Naive thymus-derived CD4-positive, alpha-beta T cell (primary cell): ENCODE measurements at regions of chr1 and their contacts with region 1.

Region 1: GRCh38 chr1:171781176-171781875 is at the start of gene METTL13:
- DNase-seq: peak; percentile 89 to 100 (median 99)
- ATAC-seq: peak; percentile 95
- H3K4me3 ChIP-seq: peak within 1 kb of the TSS; percentile 95
- H3K4me3 Mint-ChIP-seq: peak within 1 kb of the TSS; percentile 90 to 99 (median 94)
- H3K27ac ChIP-seq: peak within 1 kb of the TSS; percentile 74
- H3K27ac Mint-ChIP-seq: peak within 1 kb of the TSS; percentile 93 to 99 (median 96)
- H3K4me1 ChIP-seq: peaks cover 20 to 41% of the 10 kb centered on the region in 2 donors
- H3K4me1 Mint-ChIP-seq: peaks cover 28 to 65% (median 58%) of the 10 kb centered on the region in 7 donors
- H3K27me3 ChIP-seq: no peaks in the 10 kb centered on the region
- H3K27me3 Mint-ChIP-seq: no peaks in the 10 kb centered on the region
- total RNA-seq, gene METTL13: 15.6 to 50.7 (median 34.5) TPM

Region 2: DNA sequence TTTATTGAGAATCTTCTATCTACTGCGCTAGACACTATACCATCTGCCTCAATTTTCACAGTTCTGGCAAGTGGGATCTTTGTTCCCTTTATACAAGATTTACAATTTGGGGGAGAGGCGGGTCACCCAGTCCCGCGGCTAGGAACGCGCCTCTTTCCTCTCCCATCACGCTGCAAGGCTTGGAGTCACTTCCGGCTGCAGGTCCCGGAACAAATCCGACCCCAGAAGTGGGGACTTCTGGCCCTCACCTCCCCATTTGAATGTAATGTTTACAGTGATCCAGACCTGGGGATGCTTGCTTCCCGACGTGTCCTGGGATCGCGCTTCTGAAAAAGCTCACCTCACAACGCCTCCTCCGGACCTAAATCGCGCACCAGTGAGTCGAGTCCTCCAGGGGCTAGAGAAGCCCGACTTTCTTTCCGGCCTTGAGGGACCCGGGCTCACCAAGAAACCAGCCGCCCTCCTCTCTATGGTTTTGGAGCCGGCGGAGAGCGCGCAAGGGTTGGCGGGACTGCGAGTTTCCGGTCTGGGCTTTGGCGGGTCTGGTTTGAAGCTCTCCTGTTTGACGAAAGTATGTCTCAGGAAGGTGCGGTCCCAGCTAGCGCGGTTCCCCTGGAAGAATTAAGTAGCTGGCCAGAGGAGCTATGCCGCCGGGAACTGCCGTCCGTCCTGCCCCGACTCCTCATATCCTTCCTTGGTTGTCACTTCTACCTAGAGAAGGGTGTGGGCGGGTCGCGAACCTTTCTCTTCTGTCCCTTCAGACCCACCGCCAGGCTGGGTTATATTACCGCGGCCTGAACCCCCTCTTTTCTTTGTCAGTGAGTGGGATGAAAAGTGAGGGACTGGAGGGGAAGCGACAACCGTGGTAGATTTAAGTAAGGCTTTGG is 1986.6 kb before region 1 on chr1 and contains the start of gene METTL18:
- CTCF ChIA-PET with region 1: no interaction called
- POLR2A ChIA-PET with region 1: no interaction called
- intact Hi-C with region 1: loop called in 1 of 2 experiments (anchors 2 kb)
- DNase-seq: peak; percentile 72 to 96 (median 92)
- ATAC-seq: peak; percentile 100
- H3K4me3 ChIP-seq: peak within 1 kb of the TSS; percentile 98
- H3K4me3 Mint-ChIP-seq: peak within 1 kb of the TSS; percentile 90 to 100 (median 100)
- H3K27ac ChIP-seq: peak within 1 kb of the TSS; percentile 94
- H3K27ac Mint-ChIP-seq: peak within 1 kb of the TSS; percentile 97 to 100 (median 99)
- H3K4me1 ChIP-seq: peaks cover 10 to 28% of the 10 kb centered on the region in 2 donors
- H3K4me1 Mint-ChIP-seq: peaks cover 26 to 60% (median 56%) of the 10 kb centered on the region in 7 donors
- H3K27me3 ChIP-seq: no peaks in the 10 kb centered on the region
- H3K27me3 Mint-ChIP-seq: no peaks in the 10 kb centered on the region
- total RNA-seq, gene METTL18: 4.9 to 21.1 (median 13.4) TPM

Region 3: DNA sequence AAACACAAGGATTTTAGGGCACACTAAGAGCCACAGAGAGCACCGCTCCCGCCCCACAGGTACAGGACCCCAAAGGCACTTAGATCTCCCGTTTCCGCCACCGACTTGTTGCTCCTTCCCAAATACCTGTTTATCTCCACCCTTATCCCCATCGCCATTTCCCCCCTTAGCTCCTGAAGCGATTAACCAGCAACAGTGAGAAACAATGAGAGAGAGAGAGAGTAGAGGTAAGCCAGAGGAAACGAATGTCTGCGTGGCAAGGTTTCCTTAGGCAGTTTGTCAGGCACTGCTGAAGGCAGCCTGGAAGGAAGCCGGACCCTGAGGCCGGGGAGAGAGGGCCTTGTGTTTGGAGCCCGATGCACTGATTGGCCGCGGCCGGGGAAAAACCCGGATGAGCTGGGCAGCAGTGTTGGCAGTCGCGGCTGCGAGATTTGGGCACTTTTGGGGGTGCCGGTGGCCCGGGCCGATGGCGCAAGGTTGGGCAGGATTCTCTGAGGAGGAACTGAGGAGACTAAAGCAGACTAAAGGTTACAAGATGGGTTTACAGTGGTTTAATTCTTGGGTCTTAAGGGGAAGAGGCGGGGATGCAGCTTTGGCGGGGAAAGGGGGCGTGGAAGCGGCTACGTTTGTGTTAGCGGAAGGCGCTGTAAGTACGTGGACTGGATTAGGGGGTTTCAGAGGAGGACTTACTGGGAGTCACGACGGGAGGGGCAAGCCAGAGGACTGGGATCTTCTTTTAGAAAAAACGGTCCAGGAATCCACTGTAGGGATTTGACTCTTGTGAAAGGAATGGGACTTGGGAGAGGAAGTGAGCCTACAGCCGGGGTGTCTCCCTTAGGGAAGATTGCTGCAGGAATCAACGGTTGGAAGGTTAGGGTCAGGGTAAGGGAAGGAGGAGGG is 1249.3 kb before region 1 on chr1 and contains the start of gene GORAB:
- CTCF ChIA-PET with region 1: no interaction called
- POLR2A ChIA-PET with region 1: interaction called, 4 read pairs
- intact Hi-C with region 1: loop called in 1 of 2 experiments (anchors 2 kb)
- DNase-seq: peak; percentile 74 to 87 (median 83)
- ATAC-seq: peak; percentile 97
- H3K4me3 ChIP-seq: peak within 1 kb of the TSS; percentile 95
- H3K4me3 Mint-ChIP-seq: no peak within 1 kb of the TSS
- H3K27ac ChIP-seq: peak within 1 kb of the TSS; percentile 91
- H3K27ac Mint-ChIP-seq: peak within 1 kb of the TSS in 1 of 9 donors; percentile 36
- H3K4me1 ChIP-seq: peaks cover 8 to 14% of the 10 kb centered on the region in 2 donors
- H3K4me1 Mint-ChIP-seq: peaks cover 7 to 29% (median 19%) of the 10 kb centered on the region in 7 donors
- H3K27me3 ChIP-seq: no peaks in the 10 kb centered on the region
- H3K27me3 Mint-ChIP-seq: peaks cover 0 to 20% (median 0%) of the 10 kb centered on the region in 5 donors
- total RNA-seq, gene GORAB: 10.9 to 25.3 (median 22.7) TPM

Region 4: DNA sequence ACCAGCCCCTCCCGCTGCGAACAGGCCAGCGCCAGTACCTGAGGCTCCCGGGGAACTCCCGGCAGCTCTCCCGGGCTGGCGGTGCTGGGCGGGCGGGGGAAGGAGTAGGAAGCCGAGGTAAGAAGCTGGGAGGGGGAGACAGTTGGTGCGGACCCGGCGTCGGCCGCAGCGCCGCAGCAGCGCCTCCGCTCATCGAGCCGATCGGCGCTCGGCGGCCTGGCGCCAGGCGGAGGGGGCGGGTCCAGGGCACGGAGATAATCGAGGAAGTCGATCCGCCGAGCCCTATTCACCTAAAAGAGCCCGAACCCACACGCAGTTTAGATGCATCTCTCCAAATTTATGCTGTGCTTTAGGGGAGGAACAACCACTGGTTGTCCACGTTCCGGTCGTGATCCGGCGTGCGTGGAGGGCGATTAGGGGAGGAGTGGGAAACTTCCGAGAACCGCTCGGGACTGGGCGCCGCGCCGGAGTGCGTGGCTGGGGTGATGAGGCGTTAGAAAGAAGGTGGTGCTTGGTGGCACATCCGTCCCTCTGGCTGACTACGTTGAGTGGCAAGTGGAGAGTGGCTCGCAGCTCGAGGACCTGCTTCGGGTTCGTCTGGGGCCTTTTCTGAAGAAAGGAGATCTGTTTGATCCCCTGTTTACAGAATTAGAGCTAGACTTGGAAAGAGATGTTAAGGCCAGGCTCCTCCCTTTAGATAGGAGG is 39.3 kb before region 1 on chr1 and contains the start of gene VAMP4:
- CTCF ChIA-PET with region 1: interaction called, 4 read pairs
- POLR2A ChIA-PET with region 1: interaction called, 154 read pairs
- intact Hi-C with region 1: loop called (anchors 1 kb)
- DNase-seq: peak; percentile 78 to 90 (median 87)
- ATAC-seq: peak; percentile 90
- H3K4me3 ChIP-seq: peak within 1 kb of the TSS; percentile 95
- H3K4me3 Mint-ChIP-seq: peak within 1 kb of the TSS; percentile 97 to 100 (median 99)
- H3K27ac ChIP-seq: peak within 1 kb of the TSS; percentile 95
- H3K27ac Mint-ChIP-seq: peak within 1 kb of the TSS; percentile 98 to 100 (median 100)
- H3K4me1 ChIP-seq: peaks cover 30 to 34% of the 10 kb centered on the region in 2 donors
- H3K4me1 Mint-ChIP-seq: peaks cover 25 to 62% (median 57%) of the 10 kb centered on the region in 7 donors
- H3K27me3 ChIP-seq: no peaks in the 10 kb centered on the region
- H3K27me3 Mint-ChIP-seq: no peaks in the 10 kb centered on the region
- total RNA-seq, gene VAMP4: 16.2 to 27.2 (median 19.7) TPM

Region 5: DNA sequence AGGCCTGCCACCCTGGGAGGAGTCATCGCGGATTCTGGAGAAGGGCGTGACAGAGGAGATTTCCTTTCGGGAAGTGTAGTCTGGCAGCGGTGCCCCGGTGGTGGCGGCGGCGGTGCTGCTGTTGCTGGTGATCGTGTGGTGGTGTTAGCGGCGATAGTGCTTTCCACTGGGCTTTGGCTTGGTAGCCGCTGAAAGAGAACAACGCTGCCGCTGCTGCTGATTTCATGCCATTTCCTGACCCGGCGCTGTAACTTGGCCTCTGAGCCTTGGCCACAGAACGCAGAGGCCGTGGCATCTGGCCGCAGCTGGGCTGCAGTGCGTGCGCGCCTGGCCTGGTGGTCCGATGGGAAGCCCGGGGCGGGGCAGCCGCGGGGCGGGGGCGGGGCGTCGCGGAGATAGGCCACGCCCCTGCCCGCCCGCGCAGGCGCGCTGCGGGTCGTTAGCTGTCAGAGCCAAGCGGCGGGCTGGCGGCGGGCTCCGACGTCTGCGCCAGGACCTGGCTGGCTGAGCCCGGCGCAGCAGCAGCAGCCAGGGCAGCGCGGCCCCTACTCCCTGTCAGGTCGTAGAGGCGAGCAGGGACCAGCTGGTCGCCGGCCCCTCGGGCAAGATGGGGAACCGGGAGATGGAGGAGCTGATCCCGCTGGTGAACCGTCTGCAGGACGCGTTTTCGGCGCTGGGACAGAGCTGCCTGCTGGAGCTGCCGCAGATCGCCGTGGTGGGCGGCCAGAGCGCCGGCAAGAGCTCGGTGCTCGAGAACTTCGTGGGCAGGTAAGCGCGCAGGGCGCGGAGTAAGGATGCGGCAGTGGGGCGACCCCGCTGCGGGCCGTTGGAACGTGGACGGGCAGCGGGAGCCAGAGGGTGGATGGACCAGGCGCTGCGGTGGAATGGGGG is 60.0 kb after region 1 on chr1 and contains the start of gene DNM3:
- CTCF ChIA-PET with region 1: no interaction called
- POLR2A ChIA-PET with region 1: interaction called, 4 read pairs
- intact Hi-C with region 1: loop called (anchors 1 kb)
- DNase-seq: peak; percentile 71 to 90 (median 86)
- ATAC-seq: peak; percentile 97
- H3K4me3 ChIP-seq: peak within 1 kb of the TSS; percentile 80
- H3K4me3 Mint-ChIP-seq: peak within 1 kb of the TSS; percentile 85 to 93 (median 90)
- H3K27ac ChIP-seq: peak within 1 kb of the TSS; percentile 64
- H3K27ac Mint-ChIP-seq: peak within 1 kb of the TSS; percentile 76 to 95 (median 83)
- H3K4me1 ChIP-seq: peaks cover 0 to 6% of the 10 kb centered on the region in 2 donors
- H3K4me1 Mint-ChIP-seq: peaks cover 15 to 19% (median 18%) of the 10 kb centered on the region in 7 donors
- H3K27me3 ChIP-seq: peaks cover 3 to 16% of the 10 kb centered on the region in 2 donors
- H3K27me3 Mint-ChIP-seq: peaks cover 12 to 44% (median 16%) of the 10 kb centered on the region in 5 donors
- total RNA-seq, gene DNM3: 1.9 to 2.5 (median 2.1) TPM

Region 6: GRCh38 chr1:172040466-172040865 is 259.1 kb after region 1 on chr1:
- CTCF ChIA-PET with region 1: no interaction called
- POLR2A ChIA-PET with region 1: no interaction called
- intact Hi-C with region 1: no loop called
- DNase-seq: no peak
- ATAC-seq: no peak
- H3K4me3 ChIP-seq: no peak overlapping the region
- H3K4me3 Mint-ChIP-seq: no peak overlapping the region
- H3K27ac ChIP-seq: no peak overlapping the region
- H3K27ac Mint-ChIP-seq: no peak overlapping the region
- H3K4me1 ChIP-seq: peaks cover 4 to 6% of the 10 kb centered on the region in 2 donors
- H3K4me1 Mint-ChIP-seq: peaks cover 8 to 18% (median 16%) of the 10 kb centered on the region in 7 donors
- H3K27me3 ChIP-seq: no peaks in the 10 kb centered on the region
- H3K27me3 Mint-ChIP-seq: peaks cover 0 to 3% (median 0%) of the 10 kb centered on the region in 5 donors

Region 7: DNA sequence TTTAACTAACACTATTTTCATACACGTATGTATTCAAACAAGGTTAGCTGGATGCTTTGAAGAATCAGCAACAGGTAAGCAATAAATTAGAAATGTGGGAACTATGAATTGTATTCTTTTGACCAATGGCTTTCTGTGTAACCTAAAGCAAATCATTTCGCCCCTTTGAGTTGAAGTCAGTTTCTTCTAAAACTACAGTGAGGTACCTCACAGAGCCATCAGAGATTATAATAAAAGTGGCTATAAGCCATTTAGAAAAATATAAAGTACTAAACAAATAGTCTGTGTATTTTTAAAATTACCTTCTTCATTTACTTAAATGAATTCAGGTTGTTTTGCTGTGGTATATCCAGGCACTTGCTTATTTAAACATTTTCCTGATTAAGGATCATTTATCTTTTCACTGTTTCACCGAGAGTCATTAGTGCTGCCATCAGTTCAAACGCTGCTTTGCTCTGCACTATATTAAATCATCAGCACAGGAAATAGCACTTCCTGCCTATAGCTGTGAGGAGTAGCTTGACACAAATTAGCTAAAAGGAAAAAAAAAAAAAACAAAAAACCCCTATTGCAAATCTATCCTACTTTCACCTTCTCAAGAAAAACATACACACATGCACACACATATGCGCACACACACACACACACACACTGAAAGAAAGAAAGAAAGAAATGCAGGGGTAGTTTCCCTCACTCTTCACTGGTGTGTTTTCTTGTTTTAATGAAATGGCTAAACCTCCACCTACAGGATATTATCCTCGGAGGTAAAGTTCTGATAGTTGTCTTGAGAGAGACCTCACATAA is 599.3 kb after region 1 on chr1:
- CTCF ChIA-PET with region 1: no interaction called
- POLR2A ChIA-PET with region 1: no interaction called
- intact Hi-C with region 1: loop called in 1 of 2 experiments (anchors 2 kb)
- DNase-seq: peak in 7 of 9 donors; percentile 49 to 82 (median 70)
- ATAC-seq: peak; percentile 96
- H3K4me3 ChIP-seq: peak overlapping the region; percentile 32
- H3K4me3 Mint-ChIP-seq: peak overlapping the region; percentile 53 to 82 (median 76)
- H3K27ac ChIP-seq: peak overlapping the region; percentile 76
- H3K27ac Mint-ChIP-seq: peak overlapping the region; percentile 86 to 94 (median 93)
- H3K4me1 ChIP-seq: peaks cover 10 to 18% of the 10 kb centered on the region in 2 donors
- H3K4me1 Mint-ChIP-seq: peaks cover 12 to 57% (median 49%) of the 10 kb centered on the region in 7 donors
- H3K27me3 ChIP-seq: no peaks in the 10 kb centered on the region
- H3K27me3 Mint-ChIP-seq: peaks cover 0 to 3% (median 0%) of the 10 kb centered on the region in 5 donors

Region 8: GRCh38 chr1:172449585-172450534 is 668.5 kb after region 1 on chr1:
- CTCF ChIA-PET with region 1: no interaction called
- POLR2A ChIA-PET with region 1: no interaction called
- intact Hi-C with region 1: loop called in 1 of 2 experiments (anchors 2 kb)
- DNase-seq: peak in 7 of 9 donors; percentile 22 to 42 (median 32)
- ATAC-seq: peak; percentile 90
- H3K4me3 ChIP-seq: no peak overlapping the region
- H3K4me3 Mint-ChIP-seq: peak overlapping the region in 4 of 10 donors; percentile 35 to 67 (median 56)
- H3K27ac ChIP-seq: no peak overlapping the region
- H3K27ac Mint-ChIP-seq: peak overlapping the region in 4 of 9 donors; percentile 45 to 90 (median 87)
- H3K4me1 ChIP-seq: no peaks in the 10 kb centered on the region
- H3K4me1 Mint-ChIP-seq: peaks cover 0 to 23% (median 18%) of the 10 kb centered on the region in 7 donors
- H3K27me3 ChIP-seq: no peaks in the 10 kb centered on the region
- H3K27me3 Mint-ChIP-seq: peaks cover 0 to 3% (median 0%) of the 10 kb centered on the region in 5 donors